IMR-90 (cell line): ENCODE measurements at regions of chr9 and their contacts with region 1.

Region 1: DNA sequence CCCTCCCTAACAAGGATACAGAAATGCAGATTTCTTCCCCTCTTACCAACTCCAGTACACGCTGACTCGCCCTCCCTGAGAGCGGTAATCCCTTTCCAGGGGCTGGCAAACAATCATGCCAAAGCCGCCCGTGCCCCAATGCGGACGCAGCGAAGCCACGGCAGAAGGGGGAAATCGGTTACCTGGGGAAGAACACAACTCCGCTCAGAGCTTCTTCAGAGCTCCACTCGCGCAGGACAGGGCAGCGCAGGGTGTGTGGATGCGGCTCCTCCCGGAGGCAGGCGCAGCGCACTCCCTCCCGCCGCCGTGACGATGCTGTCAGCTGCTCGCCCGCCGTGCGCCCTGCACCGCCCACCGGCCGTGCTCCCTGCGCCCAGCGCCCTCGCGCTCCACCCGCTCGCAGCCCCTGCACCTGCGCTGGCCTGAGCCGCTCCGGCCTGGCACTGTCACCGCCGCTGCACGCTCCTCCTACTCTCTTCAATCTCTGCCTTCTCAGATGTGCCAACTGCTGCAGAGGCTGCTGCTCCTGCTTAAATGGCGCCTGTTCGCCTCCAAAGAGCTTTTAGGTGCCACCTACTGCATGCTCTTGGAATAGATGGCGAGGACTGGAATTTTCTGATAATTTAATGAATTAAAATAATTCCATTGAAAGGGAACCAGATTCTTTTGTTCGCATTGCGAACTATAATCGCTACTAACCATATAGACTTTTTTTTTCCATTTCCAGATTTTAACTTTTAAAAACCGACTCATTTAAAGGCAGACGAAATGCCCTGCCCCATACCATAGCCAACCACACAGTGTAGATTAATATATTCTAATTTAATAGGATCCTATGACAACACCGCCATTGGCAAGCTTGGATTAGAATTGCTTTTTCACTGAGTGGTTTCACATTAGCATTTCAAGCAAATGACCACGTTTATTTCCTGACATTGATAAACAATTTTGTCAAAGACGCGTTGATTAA is at the start of gene DIRAS2:
- DNase-seq: peak; percentile 43
- ATAC-seq: peak; percentile 95
- H3K4me3 ChIP-seq: peak within 1 kb of the TSS; percentile 43
- H3K27ac ChIP-seq: no peak within 1 kb of the TSS
- H3K4me1 ChIP-seq: no peaks in the 10 kb centered on the region
- H3K27me3 ChIP-seq: peaks cover 15% of the 10 kb centered on the region
- CTCF ChIP-seq: peak; percentile 31; the same call in 1 of the 2 replicates
- POLR2A ChIP-seq: no peak
- RAD21 ChIP-seq: peak; percentile 15; the same call in 1 of the 2 replicates
- total RNA-seq, gene DIRAS2: not detected in 2 replicates

Region 2: GRCh38 chr9:90142580-90142979 is 500.3 kb before region 1 on chr9:
- CTCF ChIA-PET with region 1: no interaction called
- POLR2A ChIA-PET with region 1: no interaction called
- dilution Hi-C with region 1: no loop called
- in situ Hi-C with region 1: no loop called
- intact Hi-C with region 1: loop called (anchors 2 kb)
- DNase-seq: peak; percentile 25
- ATAC-seq: no peak
- H3K4me3 ChIP-seq: no peak overlapping the region
- H3K27ac ChIP-seq: no peak overlapping the region
- H3K4me1 ChIP-seq: no peaks in the 10 kb centered on the region
- H3K27me3 ChIP-seq: peaks cover 2% of the 10 kb centered on the region; the same call in 1 of the 2 replicates
- CTCF ChIP-seq: peak; percentile 52
- POLR2A ChIP-seq: no peak
- RAD21 ChIP-seq: peak; percentile 20